Activated B cell treated with CpG ODN at 0.5 μM for 24 hours (primary cell): ENCODE measurements at regions of chr1 and their contacts with region 1.

Region 1: DNA sequence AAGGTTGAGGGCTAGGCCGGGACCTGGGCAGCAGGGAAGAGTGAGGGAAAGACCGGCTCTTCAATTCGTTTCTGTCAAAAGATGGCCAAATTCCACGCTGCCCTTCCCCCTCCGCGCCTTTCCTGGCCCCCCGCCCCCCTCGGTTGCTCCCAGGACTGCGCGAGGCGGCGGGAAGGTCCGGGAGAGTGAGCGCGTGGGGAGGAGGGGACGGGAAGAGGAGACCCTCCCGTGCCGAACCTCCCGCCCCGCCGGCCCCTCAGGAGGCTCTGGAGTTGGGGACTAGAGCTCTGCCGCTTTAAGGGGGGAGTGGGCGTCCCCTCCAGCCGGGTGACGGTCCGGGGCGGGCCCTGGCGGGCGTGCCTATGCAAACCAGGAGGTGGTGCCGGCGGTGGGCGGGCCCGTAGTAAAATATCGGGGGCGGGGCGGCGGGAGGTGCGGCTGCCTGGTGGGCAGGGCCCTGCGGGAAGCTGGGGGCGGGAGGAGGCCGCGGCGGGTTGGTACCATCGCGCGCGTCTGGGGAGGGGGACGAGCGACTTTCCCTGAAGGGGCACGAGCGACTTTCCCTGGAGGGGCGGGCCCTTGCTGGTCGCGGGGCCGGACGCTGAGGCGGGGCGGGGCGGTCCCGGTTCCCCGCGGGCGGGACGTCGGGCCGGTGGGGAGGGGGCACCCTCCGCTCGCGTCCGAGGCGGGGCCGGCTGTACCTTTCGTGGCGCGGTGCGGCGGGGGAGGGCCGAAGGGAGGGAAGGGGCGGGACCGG is 58.2 kb downstream of the BCL9 start:
- DNase-seq: peak; percentile 92
- ATAC-seq: peak; percentile 84
- H3K4me3 Mint-ChIP-seq: peak overlapping the region; percentile 87
- H3K27ac Mint-ChIP-seq: peak overlapping the region; percentile 37
- H3K4me1 Mint-ChIP-seq: peaks cover 19% of the 10 kb centered on the region
- H3K27me3 Mint-ChIP-seq: no peaks in the 10 kb centered on the region
- CTCF ChIP-seq: no peak

Region 2: DNA sequence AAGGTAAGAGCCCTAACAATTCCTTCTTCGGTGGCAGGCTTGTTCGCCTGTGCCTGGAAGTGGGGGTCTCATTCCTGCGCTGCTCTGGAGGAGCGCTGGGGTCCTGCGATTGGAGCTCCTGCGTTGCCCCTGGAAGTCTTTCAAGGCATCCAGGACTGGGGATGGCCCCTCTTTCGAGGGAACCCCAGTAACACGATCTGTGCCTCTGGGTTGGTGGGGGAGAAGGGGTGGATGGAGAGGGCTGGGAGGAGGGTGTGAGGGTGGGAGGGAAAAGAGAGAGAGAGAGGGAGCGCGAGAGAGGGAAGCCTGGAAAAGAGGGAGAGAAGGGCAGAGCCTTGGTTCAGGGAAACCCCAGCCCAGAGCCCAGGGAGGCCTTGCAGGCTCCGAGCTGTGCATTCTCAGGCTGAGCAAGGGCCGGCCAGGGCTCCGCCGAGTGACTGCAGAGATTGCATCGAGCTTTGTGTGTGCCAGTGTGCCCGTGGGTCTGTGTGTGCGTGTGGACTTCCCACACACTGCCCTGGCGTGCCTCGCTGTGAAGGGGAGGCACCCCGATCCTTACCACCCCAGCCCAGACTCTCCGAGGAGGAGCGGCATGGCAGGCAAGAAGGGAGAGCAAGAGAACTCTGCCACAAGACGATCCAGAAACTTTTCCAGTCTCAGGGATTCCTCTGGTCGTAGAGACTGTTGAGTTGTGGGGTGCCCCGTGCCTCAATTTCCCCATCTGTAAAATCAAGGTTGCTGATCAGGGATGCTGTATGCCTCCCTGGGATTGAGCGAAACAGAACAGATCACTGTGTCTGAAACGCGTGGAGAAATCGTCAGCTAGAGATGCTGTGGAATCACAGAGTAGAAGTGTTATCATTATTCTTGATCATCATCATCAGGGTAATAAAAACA is 57.6 kb before region 1 on chr1:
- CTCF ChIA-PET with region 1: no interaction called
- POLR2A ChIA-PET with region 1: interaction called, 22 read pairs
- intact Hi-C with region 1: loop called (anchors 1 kb)
- DNase-seq: peak; percentile 14
- ATAC-seq: no peak
- H3K4me3 Mint-ChIP-seq: no peak overlapping the region
- H3K27ac Mint-ChIP-seq: no peak overlapping the region
- H3K4me1 Mint-ChIP-seq: peaks cover 10% of the 10 kb centered on the region
- H3K27me3 Mint-ChIP-seq: peaks cover 30% of the 10 kb centered on the region
- CTCF ChIP-seq: no peak

Region 3: GRCh38 chr1:147670317-147671041 is 70.9 kb after region 1 on chr1 and contains the start of gene ACP6:
- CTCF ChIA-PET with region 1: no interaction called
- POLR2A ChIA-PET with region 1: interaction called, 6 read pairs
- intact Hi-C with region 1: loop called (anchors 1 kb)
- DNase-seq: peak; percentile 74
- ATAC-seq: peak; percentile 99
- H3K4me3 Mint-ChIP-seq: peak within 1 kb of the TSS; percentile 92
- H3K27ac Mint-ChIP-seq: peak within 1 kb of the TSS; percentile 44
- H3K4me1 Mint-ChIP-seq: peaks cover 14% of the 10 kb centered on the region
- H3K27me3 Mint-ChIP-seq: peaks cover 10% of the 10 kb centered on the region
- CTCF ChIP-seq: no peak
- total RNA-seq, gene ACP6: 6.9 and 10.5 TPM in 2 replicates